CD8-positive, alpha-beta T cell (primary cell): ENCODE measurements at regions of chr21 and their contacts with region 1.

Region 1: GRCh38 chr21:24903994-24904635 is 703.2 kb downstream of the MRPL39 start:
- DNase-seq: no peak
- ATAC-seq: no peak
- H3K4me3 ChIP-seq: no peak overlapping the region
- H3K4me3 Mint-ChIP-seq: no peak overlapping the region
- H3K27ac ChIP-seq: no peak overlapping the region
- H3K27ac Mint-ChIP-seq: no peak overlapping the region
- H3K4me1 ChIP-seq: no peaks in the 10 kb centered on the region
- H3K4me1 Mint-ChIP-seq: no peaks in the 10 kb centered on the region
- H3K27me3 ChIP-seq: no peaks in the 10 kb centered on the region
- H3K27me3 Mint-ChIP-seq: no peaks in the 10 kb centered on the region
- CTCF ChIP-seq: no peak

Region 2: GRCh38 chr21:23684431-23684830 is 1219.7 kb before region 1 on chr21:
- CTCF ChIA-PET with region 1: no interaction called
- POLR2A ChIA-PET with region 1: no interaction called
- intact Hi-C with region 1: loop called in 1 of 2 experiments (anchors 5 kb)
- DNase-seq: no peak
- ATAC-seq: no peak
- H3K4me3 ChIP-seq: no peak overlapping the region
- H3K4me3 Mint-ChIP-seq: no peak overlapping the region
- H3K27ac ChIP-seq: no peak overlapping the region
- H3K27ac Mint-ChIP-seq: no peak overlapping the region
- H3K4me1 ChIP-seq: no peaks in the 10 kb centered on the region
- H3K4me1 Mint-ChIP-seq: no peaks in the 10 kb centered on the region
- H3K27me3 ChIP-seq: no peaks in the 10 kb centered on the region
- H3K27me3 Mint-ChIP-seq: no peaks in the 10 kb centered on the region
- CTCF ChIP-seq: no peak